ENCODE measurements at regions of chr13 and their contacts with region 1.

Region 1: DNA sequence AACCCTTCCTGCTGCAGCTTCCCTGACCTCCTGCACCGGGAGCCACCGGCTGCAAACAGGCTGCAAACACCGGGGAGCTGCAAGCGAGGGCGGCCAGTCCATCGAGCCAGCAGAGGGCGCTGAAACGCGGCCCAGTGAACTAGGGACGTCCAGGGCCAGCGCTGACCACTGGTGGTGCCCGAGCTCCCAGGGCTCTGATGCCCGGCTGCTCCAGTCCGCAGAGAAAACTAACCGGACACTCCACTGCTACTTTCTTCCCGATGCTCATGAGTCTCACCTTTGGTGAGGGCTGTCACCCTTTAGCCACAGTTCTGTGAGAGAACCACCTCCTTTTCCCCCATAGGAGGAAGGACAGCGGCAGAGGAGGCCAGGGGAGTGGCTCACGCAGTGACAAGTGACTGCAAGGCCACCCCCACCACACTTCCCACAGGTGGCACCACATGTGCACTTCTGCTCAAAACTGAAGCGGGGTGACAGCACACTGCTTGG is 82.8 kb upstream of the MTIF3 start:
- DNase-seq: peak; percentile 85
- H3K4me3 Mint-ChIP-seq: no peak overlapping the region
- H3K27ac Mint-ChIP-seq: no peak overlapping the region
- H3K4me1 Mint-ChIP-seq: peaks cover 1% of the 10 kb centered on the region
- H3K27me3 Mint-ChIP-seq: peaks cover 16% of the 10 kb centered on the region

Region 2: GRCh38 chr13:27379694-27380641 is 153.2 kb before region 1 on chr13:
- intact Hi-C with region 1: loop called (anchors 10 kb)
- DNase-seq: peak; percentile 88
- H3K4me3 Mint-ChIP-seq: no peak overlapping the region
- H3K27ac Mint-ChIP-seq: no peak overlapping the region
- H3K4me1 Mint-ChIP-seq: peaks cover 3% of the 10 kb centered on the region
- H3K27me3 Mint-ChIP-seq: peaks cover 15% of the 10 kb centered on the region